GM12878 (cell line): ENCODE measurements at regions of chr3 and their contacts with region 1.

Region 1: GRCh38 chr3:49839193-49839809 is 17.1 kb downstream of the TRAIP start:
- DNase-seq: peak; percentile 23
- ATAC-seq: peak; percentile 99
- H3K4me3 ChIP-seq: no peak overlapping the region
- H3K27ac ChIP-seq: no peak overlapping the region
- H3K4me1 ChIP-seq: no peaks in the 10 kb centered on the region
- H3K27me3 ChIP-seq: no peaks in the 10 kb centered on the region
- CTCF ChIP-seq: peak; percentile 84 to 96 (median 89)
- EP300 ChIP-seq: no peak
- POLR2A ChIP-seq: no peak
- RAD21 ChIP-seq: peak; percentile 96

Region 2: DNA sequence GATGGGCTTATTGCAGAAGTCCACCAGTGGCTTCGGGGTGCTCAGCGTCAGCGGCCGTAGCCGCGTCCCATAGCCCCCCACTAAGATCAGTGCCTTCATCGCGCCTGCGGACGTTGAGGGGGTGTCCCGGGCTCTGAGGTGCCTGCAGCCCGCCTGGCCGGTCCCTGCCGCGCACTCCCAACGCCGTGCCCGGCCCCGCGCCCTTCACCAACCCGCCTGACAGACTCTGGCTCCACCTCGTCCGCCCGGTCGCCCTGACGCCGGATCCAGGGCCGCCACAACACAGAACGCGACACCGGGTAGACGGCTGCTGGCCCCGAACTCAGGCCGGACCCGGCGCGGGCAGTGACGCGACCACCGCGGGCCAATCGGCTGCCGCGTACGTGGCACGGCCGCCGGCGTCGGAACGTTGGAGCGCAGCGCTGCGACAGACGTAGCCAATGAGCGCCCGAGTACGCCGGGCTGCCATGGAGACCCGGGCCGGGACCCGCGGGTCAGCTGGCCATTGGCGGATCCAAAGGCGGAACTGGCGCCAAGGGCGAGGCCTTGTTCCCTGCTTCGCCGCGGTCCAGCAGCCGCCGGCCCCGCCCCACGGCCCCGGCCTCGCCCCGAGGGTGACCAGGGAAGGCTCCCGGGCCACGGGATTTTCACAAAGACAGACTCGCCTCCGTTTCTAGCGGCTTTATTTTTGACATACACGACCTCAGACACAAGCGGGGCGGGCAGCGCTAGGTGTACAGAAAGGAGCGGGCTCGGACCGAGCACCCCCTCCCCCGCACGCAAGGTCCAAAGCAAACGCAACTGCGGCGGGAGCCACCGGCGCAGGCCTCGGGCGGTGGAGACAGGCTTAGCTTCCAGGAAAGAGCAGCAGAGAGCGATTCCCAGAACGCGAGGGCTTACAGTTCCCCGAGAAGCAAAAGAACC is 115.4 kb before region 1 on chr3 and contains the start of gene GMPPB:
- CTCF ChIA-PET with region 1: interaction called, 8 read pairs
- POLR2A ChIA-PET with region 1: no interaction called
- RAD21 ChIA-PET with region 1: no interaction called
- SMC1A ChIA-PET with region 1: no interaction called
- in situ Hi-C with region 1: no loop called
- intact Hi-C with region 1: loop called (anchors 5 kb)
- DNase-seq: peak; percentile 78
- ATAC-seq: peak; percentile 90
- H3K4me3 ChIP-seq: peak within 1 kb of the TSS; percentile 87
- H3K27ac ChIP-seq: peak within 1 kb of the TSS; percentile 93
- H3K4me1 ChIP-seq: peaks cover 19% of the 10 kb centered on the region
- H3K27me3 ChIP-seq: no peaks in the 10 kb centered on the region
- CTCF ChIP-seq: no peak
- EP300 ChIP-seq: no peak
- POLR2A ChIP-seq: peak; percentile 92
- RAD21 ChIP-seq: no peak
- polyA plus RNA-seq, gene GMPPB: 2.3 to 8.7 TPM

Region 3: DNA sequence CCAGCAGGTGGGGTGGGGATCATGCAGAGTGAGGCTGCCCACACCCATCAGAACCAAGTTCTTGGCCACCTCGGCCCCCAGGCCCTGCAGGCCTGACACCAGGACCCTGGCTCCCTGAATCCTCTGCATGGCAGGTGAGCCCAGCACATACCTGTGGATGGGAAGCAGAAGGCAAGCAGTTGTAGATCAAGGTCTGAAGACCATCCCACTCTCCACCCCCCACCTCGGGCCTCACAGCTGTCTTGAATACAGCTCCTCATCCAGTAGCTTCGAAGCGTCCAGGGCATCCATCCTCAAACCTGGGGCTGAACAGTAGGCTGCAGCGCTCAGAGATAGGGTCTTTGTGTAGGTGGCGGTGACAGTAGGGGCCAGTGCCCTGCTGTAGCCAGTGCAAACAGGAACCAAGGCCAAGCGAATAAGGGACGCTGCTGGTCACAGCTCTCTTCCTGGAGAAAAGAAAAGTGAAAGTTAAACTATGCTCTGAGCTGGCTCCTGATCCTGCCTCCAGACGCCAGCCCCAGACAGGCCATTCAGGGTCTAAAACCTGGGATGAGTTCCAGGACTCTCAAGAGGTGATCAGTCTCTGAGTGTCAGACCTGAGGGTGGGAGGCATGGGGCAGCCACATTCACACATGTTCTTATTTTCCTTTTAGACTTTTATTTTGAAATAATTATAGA is 25.7 kb before region 1 on chr3 and contains the start of gene UBA7:
- CTCF ChIA-PET with region 1: interaction called, 327 read pairs
- POLR2A ChIA-PET with region 1: interaction called, 4 read pairs
- RAD21 ChIA-PET with region 1: interaction called, 9 read pairs
- SMC1A ChIA-PET with region 1: interaction called, 23 read pairs
- in situ Hi-C with region 1: no loop called
- intact Hi-C with region 1: no loop called
- DNase-seq: no peak
- ATAC-seq: peak; percentile 98
- H3K4me3 ChIP-seq: peak within 1 kb of the TSS; percentile 79
- H3K27ac ChIP-seq: peak within 1 kb of the TSS; percentile 94
- H3K4me1 ChIP-seq: peaks cover 13% of the 10 kb centered on the region
- H3K27me3 ChIP-seq: no peaks in the 10 kb centered on the region
- CTCF ChIP-seq: no peak
- EP300 ChIP-seq: no peak
- POLR2A ChIP-seq: peak; percentile 84
- RAD21 ChIP-seq: no peak
- polyA plus RNA-seq, gene UBA7: 11.8 to 22.2 TPM

Region 4: GRCh38 chr3:49899815-49900214 is 60.5 kb after region 1 on chr3:
- CTCF ChIA-PET with region 1: interaction called, 70 read pairs
- POLR2A ChIA-PET with region 1: interaction called, 3 read pairs
- RAD21 ChIA-PET with region 1: interaction called, 19 read pairs
- SMC1A ChIA-PET with region 1: interaction called, 13 read pairs
- in situ Hi-C with region 1: no loop called
- intact Hi-C with region 1: no loop called
- DNase-seq: no peak
- ATAC-seq: no peak
- H3K4me3 ChIP-seq: no peak overlapping the region
- H3K27ac ChIP-seq: no peak overlapping the region
- H3K4me1 ChIP-seq: peaks cover 15% of the 10 kb centered on the region
- H3K27me3 ChIP-seq: no peaks in the 10 kb centered on the region
- CTCF ChIP-seq: peak in 2 of 3 experiments; percentile 29 to 30; a peak in 2 of 6 replicates
- EP300 ChIP-seq: no peak
- POLR2A ChIP-seq: no peak
- RAD21 ChIP-seq: peak; percentile 27; the same call in 1 of the 2 replicates